ENCODE measurements at regions of chr10 and their contacts with region 1.

Region 1: GRCh38 chr10:15824498-15824897 is 35.8 kb downstream of the MINDY3 start:
- DNase-seq: no peak
- ATAC-seq: no peak
- H3K4me3 ChIP-seq: no peak overlapping the region
- H3K27ac ChIP-seq: no peak overlapping the region
- H3K4me1 ChIP-seq: peaks cover 0 to 9% (median 0%) of the 10 kb centered on the region in 12 donors
- H3K27me3 ChIP-seq: no peaks in the 10 kb centered on the region
- CTCF ChIP-seq: peak; percentile 31 to 72 (median 53)
- POLR2A ChIP-seq: no peak

Region 2: GRCh38 chr10:15433850-15434537 is 390.5 kb before region 1 on chr10:
- intact Hi-C with region 1: loop called (anchors 2 to 10 kb)
- DNase-seq: peak in 2 of 5 donors; percentile 33 to 34
- ATAC-seq: peak; percentile 32 to 73 (median 63)
- H3K4me3 ChIP-seq: peak overlapping the region in 10 of 12 donors; percentile 25 to 57 (median 42)
- H3K27ac ChIP-seq: no peak overlapping the region
- H3K4me1 ChIP-seq: peaks cover 0 to 7% (median 2%) of the 10 kb centered on the region in 12 donors
- H3K27me3 ChIP-seq: no peaks in the 10 kb centered on the region
- CTCF ChIP-seq: peak; percentile 63 to 82 (median 74)
- POLR2A ChIP-seq: no peak

Region 3: GRCh38 chr10:15571575-15571974 is 252.9 kb before region 1 on chr10:
- intact Hi-C with region 1: loop called in 1 of 10 experiments (anchors 10 kb)
- DNase-seq: peak; percentile 58 to 73 (median 66)
- ATAC-seq: peak in 2 of 4 donors; percentile 38 to 50
- H3K4me3 ChIP-seq: no peak overlapping the region
- H3K27ac ChIP-seq: no peak overlapping the region
- H3K4me1 ChIP-seq: peaks cover 0 to 15% (median 9%) of the 10 kb centered on the region in 12 donors
- H3K27me3 ChIP-seq: no peaks in the 10 kb centered on the region
- CTCF ChIP-seq: no peak
- POLR2A ChIP-seq: no peak

Region 4: DNA sequence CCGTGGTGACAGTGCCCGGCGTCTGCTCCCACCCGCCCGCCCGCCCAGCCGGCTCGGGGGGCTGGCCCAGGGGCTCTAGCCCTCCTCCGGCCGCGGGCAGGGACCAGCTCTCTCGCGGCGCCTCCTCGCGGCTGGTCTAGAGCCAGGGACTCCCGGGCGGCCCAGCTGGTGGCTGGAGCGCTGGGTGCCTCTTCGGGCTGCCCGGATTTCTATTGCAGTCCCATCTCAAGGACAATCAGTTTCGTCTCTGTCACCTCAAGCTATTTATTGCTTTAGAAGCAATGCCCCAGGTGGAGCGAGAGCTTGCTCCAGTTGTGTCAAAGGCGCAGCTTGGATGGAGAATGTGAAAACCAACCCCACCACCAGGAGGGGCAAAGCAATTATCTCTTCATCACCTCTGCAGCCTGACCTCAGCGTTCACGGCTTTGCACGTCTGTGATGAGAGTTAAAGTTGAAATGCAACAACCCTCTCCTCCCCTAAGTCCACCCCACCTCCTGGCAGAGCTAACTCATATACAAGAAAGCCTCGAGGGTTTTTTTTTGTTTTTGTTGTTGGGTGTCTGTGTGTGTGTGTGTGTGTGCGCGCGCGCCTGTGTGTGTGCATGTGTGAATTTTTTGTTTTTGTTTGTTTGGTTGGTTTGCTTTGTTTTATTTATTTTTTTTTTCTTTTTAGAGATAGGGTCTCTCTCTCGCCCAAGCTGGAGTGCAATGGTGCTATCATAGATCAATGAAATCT is 104.4 kb before region 1 on chr10 and contains the start of gene ITGA8:
- intact Hi-C with region 1: loop called in 6 of 10 experiments (anchors 5 to 10 kb)
- DNase-seq: peak in 4 of 5 donors; percentile 28 to 66 (median 32)
- ATAC-seq: peak in 3 of 4 donors; percentile 62 to 72 (median 70)
- H3K4me3 ChIP-seq: peak within 1 kb of the TSS; percentile 32 to 74 (median 50)
- H3K27ac ChIP-seq: peak within 1 kb of the TSS in 3 of 12 donors; percentile 6 to 68 (median 49)
- H3K4me1 ChIP-seq: peaks cover 0 to 19% (median 5%) of the 10 kb centered on the region in 12 donors
- H3K27me3 ChIP-seq: peaks cover 8 to 44% (median 26%) of the 10 kb centered on the region in 9 donors
- CTCF ChIP-seq: peak in 10 of 12 donors; percentile 19 to 56 (median 32)
- POLR2A ChIP-seq: no peak
- total RNA-seq, gene ITGA8: 0.50 to 4.3 (median 1.5) TPM

Region 5: DNA sequence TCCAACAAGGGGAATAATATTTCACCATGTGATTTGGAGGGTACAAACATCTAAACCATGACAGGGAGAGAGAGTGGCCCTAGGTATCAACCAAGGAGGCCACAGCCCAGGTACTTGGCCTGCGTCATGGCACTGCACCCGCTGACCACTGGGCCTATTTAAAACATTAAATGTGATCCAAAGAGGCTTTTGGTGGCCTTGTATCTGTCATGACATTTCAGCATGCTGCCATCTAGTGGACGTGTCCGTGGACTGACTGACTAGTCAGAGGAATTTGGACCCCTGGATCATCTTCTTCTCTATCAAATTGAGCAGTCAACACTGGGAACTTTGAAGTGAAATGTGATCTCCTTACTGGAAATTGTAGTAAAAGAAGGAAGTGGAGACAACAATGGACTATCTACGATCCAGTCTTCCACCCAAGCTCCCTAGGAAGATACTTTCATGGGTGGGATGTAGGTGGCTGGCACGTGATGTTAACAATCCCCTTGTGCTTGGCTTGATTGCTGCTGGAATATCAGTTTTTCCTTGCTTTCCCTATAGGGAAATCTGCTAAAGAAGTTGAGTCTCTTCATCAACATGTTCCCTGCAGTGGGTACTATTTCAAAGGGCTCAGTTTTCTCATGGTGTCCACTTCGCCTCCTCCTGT is 80.2 kb before region 1 on chr10:
- intact Hi-C with region 1: loop called in 1 of 10 experiments (anchors 5 kb)
- DNase-seq: peak in 3 of 5 donors; percentile 21 to 33 (median 27)
- ATAC-seq: no peak
- H3K4me3 ChIP-seq: no peak overlapping the region
- H3K27ac ChIP-seq: no peak overlapping the region
- H3K4me1 ChIP-seq: peaks cover 0 to 10% (median 0%) of the 10 kb centered on the region in 12 donors
- H3K27me3 ChIP-seq: no peaks in the 10 kb centered on the region
- CTCF ChIP-seq: peak; percentile 21 to 60 (median 42)
- POLR2A ChIP-seq: no peak

Region 6: GRCh38 chr10:15775513-15775912 is 49.0 kb before region 1 on chr10:
- intact Hi-C with region 1: no loop called
- DNase-seq: no peak
- ATAC-seq: no peak
- H3K4me3 ChIP-seq: no peak overlapping the region
- H3K27ac ChIP-seq: no peak overlapping the region
- H3K4me1 ChIP-seq: peaks cover 0 to 11% (median 3%) of the 10 kb centered on the region in 12 donors
- H3K27me3 ChIP-seq: no peaks in the 10 kb centered on the region
- CTCF ChIP-seq: no peak
- POLR2A ChIP-seq: no peak

Measured in heart left ventricle (tissue), 16 donors.